ENCODE measurements at regions of chr7 and their contacts with region 1.

Region 1: DNA sequence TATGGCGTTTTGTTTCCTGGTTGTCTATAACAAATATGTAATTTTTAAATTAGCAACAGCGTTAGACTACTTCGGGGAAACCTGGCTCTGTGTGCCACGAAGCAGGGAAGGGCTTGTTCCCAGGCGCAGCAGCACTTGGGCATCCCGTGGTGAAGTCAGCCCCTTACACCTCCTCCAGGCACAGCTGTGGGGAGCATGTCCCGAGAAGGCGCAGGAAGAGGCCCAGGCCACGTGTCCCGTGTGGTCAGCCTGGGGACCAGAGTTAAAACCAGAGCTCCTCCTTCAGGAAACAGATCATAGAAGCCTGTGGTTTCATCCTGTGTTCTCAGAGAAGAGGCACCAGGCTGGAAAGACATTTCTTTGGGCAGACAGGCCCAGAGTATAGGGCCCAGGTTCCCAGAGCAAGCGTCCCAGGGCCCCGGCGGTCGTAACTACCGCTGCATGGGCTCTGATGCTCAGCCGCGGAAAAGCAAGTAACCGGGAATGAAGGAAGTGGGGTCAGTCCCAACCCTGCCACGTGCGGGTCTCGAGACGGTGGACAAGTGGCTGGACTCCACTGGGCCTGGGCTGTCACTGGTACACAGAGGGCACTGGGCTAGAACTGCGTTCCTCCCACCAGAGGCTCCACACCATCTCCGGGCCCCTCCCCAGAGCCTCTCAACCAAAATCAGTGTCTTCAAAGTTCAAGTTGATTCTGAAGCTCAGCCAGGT is 7.1 kb downstream of the NUDT1 start:
- DNase-seq: no peak
- ATAC-seq: peak; percentile 63
- H3K4me3 ChIP-seq: no peak overlapping the region
- H3K27ac ChIP-seq: peak overlapping the region; percentile 55; the same call in 1 of the 2 replicates
- H3K4me1 ChIP-seq: peaks cover 5% of the 10 kb centered on the region
- H3K27me3 ChIP-seq: no peaks in the 10 kb centered on the region
- CTCF ChIP-seq: no peak

Region 2: DNA sequence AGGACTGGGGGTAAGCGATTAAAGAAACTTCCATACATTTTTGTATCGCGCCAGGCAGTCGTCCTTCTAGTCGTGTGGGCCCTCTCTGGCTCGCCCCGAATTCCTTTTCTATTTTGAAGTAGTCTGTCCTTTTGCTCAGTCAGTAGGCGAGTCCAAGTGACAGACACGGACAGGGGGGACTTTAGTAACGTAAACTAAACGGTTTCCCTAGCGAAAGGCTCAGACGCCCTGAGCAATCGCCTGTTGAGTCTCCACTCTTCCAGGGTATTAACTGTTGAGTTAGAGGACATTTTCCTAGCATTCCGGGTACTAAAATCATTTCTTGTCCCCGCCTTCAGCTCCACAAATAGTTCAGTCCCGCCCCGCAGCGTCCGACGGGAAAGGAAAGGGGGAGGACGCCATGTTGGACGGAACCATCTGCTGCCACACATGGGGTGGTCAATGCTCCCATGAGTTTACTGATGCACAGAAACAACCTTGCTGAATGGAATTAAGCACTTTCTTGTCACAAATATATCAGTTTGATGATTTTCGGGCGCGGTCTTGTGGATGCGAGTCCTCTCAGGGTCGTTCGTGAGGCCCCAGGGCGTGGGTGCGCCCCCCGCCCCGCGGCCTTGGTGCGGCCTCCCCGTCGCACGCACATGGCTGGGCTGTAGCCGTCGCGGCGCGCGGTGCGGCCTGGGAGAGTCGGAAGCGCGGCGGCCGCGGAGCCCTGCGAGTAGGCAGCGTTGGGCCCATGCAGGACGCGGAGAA is 105.2 kb after region 1 on chr7 and contains the start of gene EIF3B:
- CTCF ChIA-PET with region 1: interaction called, 6 read pairs
- POLR2A ChIA-PET with region 1: no interaction called
- in situ Hi-C with region 1: no loop called
- intact Hi-C with region 1: loop called (anchors 5 kb)
- DNase-seq: peak; percentile 94
- ATAC-seq: peak; percentile 92
- H3K4me3 ChIP-seq: peak within 1 kb of the TSS; percentile 64 to 98
- H3K27ac ChIP-seq: peak within 1 kb of the TSS; percentile 99
- H3K4me1 ChIP-seq: peaks cover 13% of the 10 kb centered on the region
- H3K27me3 ChIP-seq: no peaks in the 10 kb centered on the region
- CTCF ChIP-seq: no peak
- total RNA-seq, gene EIF3B: 432 TPM